ENCODE measurements at regions of chr2 and their contacts with region 1.

Region 1: GRCh38 chr2:43226558-43226954 is at the start of gene ZFP36L2:
- DNase-seq: peak; percentile 97 to 98 (median 97)
- H3K4me3 ChIP-seq: peak within 1 kb of the TSS; percentile 84
- H3K27ac ChIP-seq: peak within 1 kb of the TSS; percentile 90 to 92
- H3K4me1 ChIP-seq: peaks cover 15% of the 10 kb centered on the region
- H3K27me3 ChIP-seq: no peaks in the 10 kb centered on the region
- CTCF ChIP-seq: peak in 1 of 3 donors; percentile 40
- EP300 ChIP-seq: no peak
- POLR2A ChIP-seq: peak; percentile 77
- total RNA-seq, gene ZFP36L2: 115 to 369 (median 254) TPM

Region 2: GRCh38 chr2:42859006-42859552 is 367.5 kb before region 1 on chr2:
- intact Hi-C with region 1: loop called in 2 of 4 experiments (anchors 10 kb)
- DNase-seq: peak in 3 of 5 donors; percentile 58 to 69 (median 63)
- H3K4me3 ChIP-seq: no peak overlapping the region
- H3K27ac ChIP-seq: no peak overlapping the region
- H3K4me1 ChIP-seq: peaks cover 7% of the 10 kb centered on the region
- H3K27me3 ChIP-seq: no peaks in the 10 kb centered on the region
- CTCF ChIP-seq: peak; percentile 54 to 86 (median 73)
- EP300 ChIP-seq: no peak
- POLR2A ChIP-seq: no peak

Region 3: GRCh38 chr2:42974721-42975717 is 251.5 kb before region 1 on chr2:
- intact Hi-C with region 1: loop called in 3 of 4 experiments (anchors 2 to 5 kb)
- DNase-seq: peak; percentile 85 to 92 (median 89)
- H3K4me3 ChIP-seq: peak overlapping the region; percentile 35
- H3K27ac ChIP-seq: peak overlapping the region; percentile 64 to 90
- H3K4me1 ChIP-seq: peaks cover 16% of the 10 kb centered on the region
- H3K27me3 ChIP-seq: no peaks in the 10 kb centered on the region
- CTCF ChIP-seq: peak; percentile 89 to 98 (median 96)
- EP300 ChIP-seq: no peak
- POLR2A ChIP-seq: peak; percentile 7

Region 4: GRCh38 chr2:42987112-42987922 is 239.2 kb before region 1 on chr2:
- intact Hi-C with region 1: no loop called
- DNase-seq: peak in 1 of 5 donors; percentile 6
- H3K4me3 ChIP-seq: no peak overlapping the region
- H3K27ac ChIP-seq: no peak overlapping the region
- H3K4me1 ChIP-seq: no peaks in the 10 kb centered on the region
- H3K27me3 ChIP-seq: no peaks in the 10 kb centered on the region
- CTCF ChIP-seq: no peak
- EP300 ChIP-seq: no peak
- POLR2A ChIP-seq: no peak

Region 5: DNA sequence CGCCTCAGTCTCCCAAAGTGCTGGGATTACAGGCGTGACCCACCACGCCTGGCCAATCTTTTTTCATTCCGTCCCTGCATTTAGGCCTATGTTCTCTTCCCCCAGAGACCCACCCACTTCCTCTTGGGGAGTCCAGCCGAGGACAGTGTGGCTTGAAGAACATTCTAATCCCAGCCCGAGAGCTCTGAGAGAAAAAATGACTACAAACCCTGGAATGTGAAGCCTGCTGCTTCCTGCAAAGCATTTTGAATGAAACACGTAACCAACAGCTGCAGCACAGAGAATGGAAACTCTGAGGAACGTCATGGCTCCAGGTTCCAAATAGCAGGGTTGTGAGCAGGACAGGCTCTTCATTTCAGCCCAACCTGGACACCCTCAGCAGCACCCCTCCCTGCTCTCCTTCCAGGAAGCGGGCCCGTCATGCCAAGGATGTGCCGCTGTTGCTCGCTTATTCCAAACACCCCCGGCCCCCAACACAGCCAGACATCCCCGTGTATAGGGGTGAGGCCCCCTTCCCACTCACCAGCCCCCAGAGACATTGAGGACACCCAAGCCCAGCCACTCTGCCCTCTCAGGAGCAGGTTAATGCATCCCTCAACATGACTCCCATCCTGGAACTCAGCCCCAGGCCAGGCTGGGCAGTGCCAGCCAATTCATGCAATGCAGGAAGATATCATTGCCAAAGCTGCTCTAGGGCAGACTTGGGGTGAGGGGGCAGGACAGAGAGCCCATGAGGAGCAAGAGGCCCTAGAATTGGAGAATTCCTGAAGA is 139.9 kb before region 1 on chr2:
- intact Hi-C with region 1: loop called in 2 of 4 experiments (anchors 5 to 10 kb)
- DNase-seq: peak; percentile 61 to 84 (median 74)
- H3K4me3 ChIP-seq: no peak overlapping the region
- H3K27ac ChIP-seq: peak overlapping the region; percentile 61 to 76
- H3K4me1 ChIP-seq: peaks cover 31% of the 10 kb centered on the region
- H3K27me3 ChIP-seq: no peaks in the 10 kb centered on the region
- CTCF ChIP-seq: no peak
- EP300 ChIP-seq: peak; percentile 77
- POLR2A ChIP-seq: peak; percentile 21

Region 6: DNA sequence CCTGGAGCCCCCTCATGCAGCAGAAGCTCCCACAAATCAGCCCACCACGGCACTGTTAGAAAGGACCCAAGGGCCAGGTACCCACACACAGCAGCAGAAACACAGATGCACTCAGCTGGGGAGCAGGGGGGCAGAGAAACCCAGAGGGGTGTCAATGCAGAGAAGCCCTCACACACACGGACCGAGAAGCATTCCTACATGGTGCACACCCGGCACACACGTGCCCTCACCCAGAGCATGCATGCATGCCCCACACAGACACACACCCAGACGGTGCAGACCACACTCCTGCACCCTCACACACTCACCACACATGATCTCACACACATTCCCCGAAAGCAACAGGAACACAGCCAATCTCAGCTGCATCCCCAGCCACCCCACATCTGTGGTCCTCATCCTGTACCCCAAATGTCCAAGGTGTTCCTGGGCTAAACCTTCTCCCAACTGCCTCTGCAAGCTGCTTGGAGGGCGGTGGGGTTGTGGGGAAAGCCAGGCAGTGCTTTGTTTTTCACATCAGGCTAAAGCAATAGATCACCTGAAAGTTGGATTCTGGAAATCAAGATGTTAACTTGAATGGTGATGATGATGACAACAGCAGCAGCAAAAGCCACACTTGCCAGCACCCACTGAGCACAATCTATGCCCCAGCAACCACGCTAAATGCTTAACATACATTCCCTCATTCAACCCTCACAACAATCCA is 102.4 kb before region 1 on chr2:
- intact Hi-C with region 1: no loop called
- DNase-seq: peak in 1 of 5 donors; percentile 17
- H3K4me3 ChIP-seq: no peak overlapping the region
- H3K27ac ChIP-seq: no peak overlapping the region
- H3K4me1 ChIP-seq: no peaks in the 10 kb centered on the region
- H3K27me3 ChIP-seq: no peaks in the 10 kb centered on the region
- CTCF ChIP-seq: no peak
- EP300 ChIP-seq: no peak
- POLR2A ChIP-seq: no peak

Region 7: DNA sequence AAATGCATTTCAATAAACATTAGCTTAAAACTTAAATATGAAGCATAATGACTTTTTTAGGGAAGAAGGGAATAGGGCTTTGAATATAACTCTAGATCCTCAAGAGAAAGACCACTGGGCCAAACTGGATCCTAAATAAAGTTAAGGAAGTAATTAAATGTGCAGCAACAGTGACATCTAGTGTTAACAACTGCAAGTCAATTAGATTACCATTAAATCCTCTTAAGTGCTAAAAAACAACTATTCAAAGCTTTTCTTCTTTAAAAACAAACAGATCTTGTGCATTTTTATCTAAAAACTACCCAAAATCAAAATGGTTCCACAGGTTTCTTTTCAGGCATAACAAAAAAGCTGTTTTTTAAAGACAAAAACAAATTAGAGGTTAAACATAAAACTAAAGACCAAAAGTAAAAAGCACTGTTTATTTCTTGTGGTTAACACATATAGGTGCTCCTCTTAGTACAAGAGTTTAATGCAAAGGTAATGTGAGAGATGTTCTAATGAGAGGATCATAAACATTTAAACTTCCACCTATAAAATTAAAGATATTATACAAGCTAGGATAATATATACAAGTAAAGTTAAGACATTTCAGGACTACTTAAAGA is 257.9 kb after region 1 on chr2:
- intact Hi-C with region 1: loop called in 3 of 4 experiments (anchors 5 kb)
- DNase-seq: no peak
- H3K4me3 ChIP-seq: no peak overlapping the region
- H3K27ac ChIP-seq: peak overlapping the region in 1 of 2 donors; percentile 49
- H3K4me1 ChIP-seq: peaks cover 4% of the 10 kb centered on the region
- H3K27me3 ChIP-seq: no peaks in the 10 kb centered on the region
- CTCF ChIP-seq: peak; percentile 35 to 91 (median 67)
- EP300 ChIP-seq: no peak
- POLR2A ChIP-seq: no peak